ENCODE measurements at regions of chr1 and their contacts with region 1.

Region 1: GRCh38 chr1:29033829-29034466 is 89.8 kb downstream of the TMEM200B start:
- DNase-seq: no peak
- ATAC-seq: peak; percentile 45

Region 2: DNA sequence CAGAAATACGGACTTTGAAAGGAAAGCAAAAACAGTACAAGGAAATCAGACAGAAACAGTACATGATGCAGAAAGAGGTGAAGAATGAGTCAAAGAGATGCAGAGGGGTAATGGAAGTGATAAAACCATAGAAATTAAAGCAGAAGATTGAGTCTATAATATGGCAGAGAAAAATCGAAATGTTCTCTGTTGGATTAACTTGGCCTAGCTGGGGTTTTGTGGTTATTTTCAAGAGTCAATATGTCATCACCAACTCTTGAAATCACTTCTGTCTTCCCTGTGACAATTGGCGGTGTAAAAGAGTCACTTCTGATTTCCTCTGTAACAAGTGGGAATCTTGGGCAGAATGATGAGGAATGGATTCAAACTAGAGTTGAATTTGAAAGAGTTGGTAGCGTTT is 289.8 kb before region 1 on chr1:
- intact Hi-C with region 1: no loop called
- DNase-seq: no peak
- ATAC-seq: no peak

Region 3: GRCh38 chr1:29202584-29203340 is 168.8 kb after region 1 on chr1:
- intact Hi-C with region 1: loop called (anchors 5 kb)
- DNase-seq: peak; percentile 96
- ATAC-seq: peak; percentile 94

Measured in left ventricle myocardium superior (tissue), 1 donor.